Sciatic nerve (tissue), 2 donors: ENCODE measurements at regions of chr14 and their contacts with region 1.

Region 1: DNA sequence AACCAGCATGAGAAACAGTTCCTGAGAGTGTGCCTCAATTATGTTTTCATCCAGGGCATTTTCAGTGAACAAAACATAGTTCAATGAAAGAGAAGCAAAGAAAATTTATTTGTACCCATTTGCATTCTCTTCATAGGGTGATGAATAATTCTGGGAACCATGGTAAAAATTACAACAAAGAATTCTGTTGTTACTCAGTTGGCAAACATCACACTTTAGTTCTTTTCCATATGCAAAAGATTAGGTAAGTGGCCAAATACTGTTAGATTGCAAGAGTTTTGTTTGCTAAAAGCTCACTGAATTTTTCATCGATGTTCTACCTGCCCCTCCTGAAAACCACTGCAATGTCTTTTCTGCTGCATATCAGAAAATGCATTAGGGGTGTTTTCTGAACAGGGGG is 132.4 kb upstream of the RGS6 start:
- DNase-seq: no peak
- ATAC-seq: no peak

Region 2: DNA sequence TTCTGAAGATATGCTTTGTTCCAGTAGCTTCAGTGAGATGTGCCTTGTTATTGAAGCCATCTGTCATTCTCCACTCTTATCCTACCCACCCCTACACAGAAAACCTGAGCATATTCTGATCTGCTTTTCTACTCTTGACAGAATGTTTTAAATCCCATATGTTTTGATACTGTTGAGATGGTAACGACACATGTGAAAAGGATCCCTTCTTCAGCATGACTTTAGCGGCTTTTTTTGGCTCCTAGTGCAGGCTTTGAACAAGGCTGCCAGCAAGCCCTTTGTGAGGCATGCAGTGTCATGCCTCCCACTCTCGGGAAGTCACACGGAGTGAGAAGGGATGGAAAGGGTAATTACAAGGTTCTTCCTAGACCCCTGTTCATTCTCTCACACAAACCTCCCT is 96.4 kb before region 1 on chr14:
- intact Hi-C with region 1: no loop called
- DNase-seq: no peak
- ATAC-seq: peak; percentile 80

Region 3: GRCh38 chr14:72084935-72085334 is 285.1 kb after region 1 on chr14:
- intact Hi-C with region 1: loop called (anchors 10 kb)
- DNase-seq: no peak
- ATAC-seq: no peak